Tibial artery (tissue), 4 donors: ENCODE measurements at regions of chr5 and their contacts with region 1.

Region 1: GRCh38 chr5:66814146-66814991 is 218.2 kb downstream of the MAST4 start:
- DNase-seq: no peak
- H3K4me3 ChIP-seq: no peak overlapping the region
- H3K27ac ChIP-seq: no peak overlapping the region
- H3K4me1 ChIP-seq: no peaks in the 10 kb centered on the region
- H3K27me3 ChIP-seq: peaks cover 0 to 6% of the 10 kb centered on the region in 2 donors
- CTCF ChIP-seq: peak; percentile 62 to 68

Region 2: DNA sequence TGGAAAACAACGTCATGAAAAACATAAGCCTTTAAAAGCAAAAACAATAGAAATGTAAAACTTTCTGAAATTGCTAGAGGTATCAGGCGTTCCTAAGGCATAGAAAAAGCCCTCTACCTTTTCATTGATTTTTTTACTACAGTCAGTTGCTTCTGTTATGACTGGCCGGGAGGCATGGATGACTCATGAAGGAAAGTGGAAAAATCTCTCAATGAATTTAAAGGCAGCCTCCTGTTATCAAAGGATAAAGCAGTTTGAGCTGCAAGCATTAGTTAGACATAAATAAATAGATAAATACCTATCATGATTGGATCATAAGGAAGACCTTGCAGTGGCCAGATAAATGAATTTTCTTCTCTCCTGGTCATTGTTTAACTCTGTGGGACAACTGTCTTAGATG is 63.5 kb after region 1 on chr5:
- intact Hi-C with region 1: no loop called
- DNase-seq: no peak
- H3K4me3 ChIP-seq: no peak overlapping the region
- H3K27ac ChIP-seq: no peak overlapping the region
- H3K4me1 ChIP-seq: peaks cover 0 to 16% (median 3%) of the 10 kb centered on the region in 4 donors
- H3K27me3 ChIP-seq: no peaks in the 10 kb centered on the region
- CTCF ChIP-seq: no peak

Region 3: GRCh38 chr5:66933066-66933465 is 118.7 kb after region 1 on chr5:
- intact Hi-C with region 1: loop called (anchors 10 kb)
- DNase-seq: no peak
- H3K4me3 ChIP-seq: no peak overlapping the region
- H3K27ac ChIP-seq: no peak overlapping the region
- H3K4me1 ChIP-seq: no peaks in the 10 kb centered on the region
- H3K27me3 ChIP-seq: no peaks in the 10 kb centered on the region
- CTCF ChIP-seq: no peak

Region 4: GRCh38 chr5:67149951-67150523 is 335.7 kb after region 1 on chr5:
- intact Hi-C with region 1: loop called (anchors 10 kb)
- DNase-seq: no peak
- H3K4me3 ChIP-seq: no peak overlapping the region
- H3K27ac ChIP-seq: no peak overlapping the region
- H3K4me1 ChIP-seq: no peaks in the 10 kb centered on the region
- H3K27me3 ChIP-seq: no peaks in the 10 kb centered on the region
- CTCF ChIP-seq: peak; percentile 28 to 35